PC-3 (cell line): ENCODE measurements at regions of chr16 and their contacts with region 1.

Region 1: DNA sequence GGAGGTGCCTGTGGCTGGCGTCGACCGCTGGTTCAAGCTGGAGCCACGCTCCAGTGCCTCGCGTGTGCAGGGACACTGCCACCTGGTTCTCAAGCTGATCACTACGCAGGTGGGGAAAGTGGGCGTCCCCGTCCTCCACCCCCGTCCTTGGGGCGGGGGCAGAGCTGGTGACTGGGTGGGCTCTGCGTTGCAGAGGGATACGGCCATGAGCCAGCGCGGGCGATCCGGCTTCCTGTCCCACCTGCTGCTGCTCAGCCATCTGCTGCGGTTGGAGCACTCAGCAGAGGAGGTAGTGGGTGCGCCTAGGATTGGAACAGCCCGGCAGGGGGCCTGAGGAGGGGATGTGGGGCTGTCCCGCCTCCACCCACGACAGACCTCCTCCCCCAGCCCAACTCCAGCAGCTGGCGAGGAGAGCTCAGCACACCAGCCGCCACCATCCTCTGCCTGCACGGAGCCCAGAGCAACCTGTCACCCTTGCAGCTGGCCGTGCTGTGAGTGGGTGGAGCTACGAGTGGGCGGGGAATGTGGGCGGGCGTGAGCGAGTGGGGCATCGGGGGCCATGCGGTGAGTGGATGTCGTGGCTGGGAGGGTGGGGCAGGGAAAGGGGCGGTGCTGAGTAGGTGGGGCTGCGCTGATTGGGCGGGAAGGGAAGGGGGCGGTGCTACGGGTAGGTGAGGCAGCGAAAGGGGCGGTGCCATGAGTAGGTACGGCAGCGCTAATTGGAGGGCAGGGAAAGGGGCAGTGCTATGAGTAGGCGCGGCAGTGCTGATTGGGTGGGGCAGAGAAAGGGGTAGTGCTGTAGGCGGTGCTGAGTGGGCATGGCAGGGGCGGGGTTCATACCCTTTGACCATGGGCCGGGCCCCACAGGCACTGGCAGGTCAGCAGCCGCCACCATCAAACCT is 8.9 kb downstream of the TSR3 start:
- DNase-seq: peak; percentile 94
- ATAC-seq: peak; percentile 97
- H3K4me3 ChIP-seq: peak overlapping the region; percentile 87
- H3K27ac ChIP-seq: no peak overlapping the region
- H3K4me1 ChIP-seq: no peaks in the 10 kb centered on the region; the same call in 1 of the 2 replicates
- H3K27me3 ChIP-seq: no peaks in the 10 kb centered on the region
- CTCF ChIP-seq: no peak

Region 2: DNA sequence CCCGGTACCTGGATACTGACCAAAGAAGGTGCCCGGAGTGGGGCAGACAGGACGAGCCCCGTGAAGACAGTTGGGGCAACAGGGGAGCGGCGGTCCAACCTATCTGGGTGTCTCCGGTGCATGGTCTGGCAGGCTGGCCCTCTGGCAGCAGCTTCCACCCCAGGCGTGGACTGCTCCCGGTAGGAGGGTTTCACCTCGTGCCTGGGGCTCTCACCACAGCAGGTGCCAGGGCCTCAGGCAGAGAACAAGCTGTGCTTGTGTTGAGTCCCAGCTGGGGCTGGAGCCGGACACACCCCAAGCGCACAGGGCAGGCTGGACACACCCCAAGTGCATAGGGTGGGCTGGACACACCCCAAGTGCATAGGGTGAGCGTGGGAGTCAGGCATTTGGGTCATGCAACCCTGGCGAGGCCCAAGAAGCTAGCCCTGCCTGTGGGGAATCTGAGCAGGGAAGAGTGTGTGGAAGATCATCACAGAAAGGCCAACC is 635.7 kb before region 1 on chr16:
- CTCF ChIA-PET with region 1: no interaction called
- POLR2A ChIA-PET with region 1: interaction called, 12 read pairs
- intact Hi-C with region 1: no loop called
- DNase-seq: no peak
- ATAC-seq: no peak
- H3K4me3 ChIP-seq: no peak overlapping the region
- H3K27ac ChIP-seq: no peak overlapping the region
- H3K4me1 ChIP-seq: peaks cover 4% of the 10 kb centered on the region; the same call in 1 of the 2 replicates
- H3K27me3 ChIP-seq: peaks cover 33% of the 10 kb centered on the region
- CTCF ChIP-seq: no peak

Region 3: GRCh38 chr16:1354815-1355540 is 12.2 kb after region 1 on chr16:
- CTCF ChIA-PET with region 1: no interaction called
- POLR2A ChIA-PET with region 1: interaction called, 15 read pairs
- intact Hi-C with region 1: no loop called
- DNase-seq: no peak
- ATAC-seq: no peak
- H3K4me3 ChIP-seq: no peak overlapping the region
- H3K27ac ChIP-seq: no peak overlapping the region
- H3K4me1 ChIP-seq: peaks cover 9% of the 10 kb centered on the region; the same call in 1 of the 2 replicates
- H3K27me3 ChIP-seq: no peaks in the 10 kb centered on the region
- CTCF ChIP-seq: no peak

Region 4: DNA sequence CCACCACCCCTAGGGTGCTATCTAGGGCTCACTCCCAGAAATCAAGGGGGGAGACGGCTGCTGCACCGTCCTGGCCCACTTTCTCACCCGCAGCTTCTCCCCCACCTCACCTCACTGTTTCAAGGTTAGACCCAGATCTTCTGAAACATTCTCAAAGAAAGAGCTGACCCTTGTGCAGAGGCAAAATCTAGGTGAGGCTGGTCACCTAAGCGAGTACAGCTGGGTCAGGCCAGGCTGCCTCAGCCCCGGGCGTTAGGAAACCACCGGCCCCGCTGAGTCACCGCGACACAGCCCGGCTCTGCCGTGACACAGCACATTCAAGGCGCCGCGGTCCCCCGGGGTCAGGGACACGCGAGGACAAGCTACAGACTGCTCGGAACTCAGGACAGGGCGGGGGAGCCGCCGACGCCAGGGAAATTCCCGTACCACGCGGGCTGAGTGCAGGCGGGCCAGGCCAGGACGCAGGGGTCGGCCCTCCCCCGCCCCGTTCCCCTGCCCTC is 36.1 kb after region 1 on chr16:
- CTCF ChIA-PET with region 1: no interaction called
- POLR2A ChIA-PET with region 1: interaction called, 20 read pairs
- intact Hi-C with region 1: no loop called
- DNase-seq: peak; percentile 75
- ATAC-seq: peak; percentile 73
- H3K4me3 ChIP-seq: peak overlapping the region; percentile 87
- H3K27ac ChIP-seq: peak overlapping the region; percentile 86
- H3K4me1 ChIP-seq: peaks cover 13% of the 10 kb centered on the region
- H3K27me3 ChIP-seq: no peaks in the 10 kb centered on the region
- CTCF ChIP-seq: no peak

Region 5: GRCh38 chr16:1726661-1727502 is 384.1 kb after region 1 on chr16:
- CTCF ChIA-PET with region 1: no interaction called
- POLR2A ChIA-PET with region 1: interaction called, 12 read pairs
- intact Hi-C with region 1: no loop called
- DNase-seq: no peak
- ATAC-seq: no peak
- H3K4me3 ChIP-seq: no peak overlapping the region
- H3K27ac ChIP-seq: no peak overlapping the region
- H3K4me1 ChIP-seq: peaks cover 11% of the 10 kb centered on the region; the same call in 1 of the 2 replicates
- H3K27me3 ChIP-seq: no peaks in the 10 kb centered on the region
- CTCF ChIP-seq: no peak